HEK293 (cell line): ENCODE measurements at regions of chr12 and their contacts with region 1.

Region 1: DNA sequence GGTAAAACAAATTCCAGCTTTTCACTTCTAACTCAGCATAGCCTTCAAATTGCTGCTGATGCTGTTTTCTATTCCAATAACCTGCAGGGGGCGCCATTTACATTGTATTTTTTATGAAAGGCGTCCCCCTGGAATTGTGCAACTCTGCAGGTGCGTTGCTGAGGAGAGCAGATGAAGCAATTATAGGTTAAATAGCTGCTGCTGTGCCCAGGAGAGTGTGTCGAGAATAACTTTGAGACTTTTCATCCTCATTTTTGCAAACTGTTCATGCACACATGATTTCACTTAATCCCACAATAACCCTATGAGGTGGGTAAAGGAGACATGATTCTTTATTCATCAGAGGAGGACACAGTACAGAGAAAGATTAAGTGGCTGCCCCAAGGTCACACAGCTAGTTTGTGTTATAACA is 75.7 kb downstream of the MYRFL start:
- H3K4me3 ChIP-seq: no peak overlapping the region
- H3K27ac ChIP-seq: no peak overlapping the region
- H3K4me1 ChIP-seq: no peaks in the 10 kb centered on the region
- CTCF ChIP-seq: peak; percentile 56; the same call in 1 of the 2 replicates

Region 2: GRCh38 chr12:69840727-69841126 is 60.0 kb before region 1 on chr12:
- CTCF ChIA-PET with region 1: no interaction called
- POLR2A ChIA-PET with region 1: no interaction called
- H3K4me3 ChIP-seq: no peak overlapping the region
- H3K27ac ChIP-seq: no peak overlapping the region
- H3K4me1 ChIP-seq: no peaks in the 10 kb centered on the region
- CTCF ChIP-seq: no peak

Region 3: GRCh38 chr12:69879041-69879960 is 21.4 kb before region 1 on chr12:
- CTCF ChIA-PET with region 1: interaction called, 25 read pairs
- POLR2A ChIA-PET with region 1: no interaction called
- H3K4me3 ChIP-seq: no peak overlapping the region
- H3K27ac ChIP-seq: no peak overlapping the region
- H3K4me1 ChIP-seq: no peaks in the 10 kb centered on the region
- CTCF ChIP-seq: peak; percentile 64; the same call in 1 of the 2 replicates

Region 4: GRCh38 chr12:69885658-69886057 is 15.1 kb before region 1 on chr12:
- CTCF ChIA-PET with region 1: interaction called, 17 read pairs
- POLR2A ChIA-PET with region 1: no interaction called
- H3K4me3 ChIP-seq: no peak overlapping the region
- H3K27ac ChIP-seq: no peak overlapping the region
- H3K4me1 ChIP-seq: no peaks in the 10 kb centered on the region
- CTCF ChIP-seq: no peak

Region 5: DNA sequence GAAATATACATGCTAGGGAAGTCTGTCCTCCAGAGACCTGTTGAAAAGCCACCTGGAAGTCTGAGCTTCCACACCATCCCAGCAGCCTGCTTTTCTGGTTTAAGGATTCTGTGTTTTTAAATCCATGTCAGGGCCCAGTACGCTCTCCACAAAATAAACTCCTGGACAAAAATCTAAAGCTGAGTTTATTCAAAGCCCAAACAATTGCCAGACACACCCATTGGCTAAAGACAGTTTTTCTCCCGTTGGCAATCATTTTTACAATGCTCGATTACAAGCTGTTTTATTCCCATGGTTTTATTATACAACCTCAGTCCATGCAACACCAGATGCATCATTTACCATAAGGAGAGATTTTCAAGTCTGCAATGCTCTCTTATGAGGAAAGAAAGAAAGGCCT is 18.8 kb after region 1 on chr12:
- CTCF ChIA-PET with region 1: interaction called, 11 read pairs
- POLR2A ChIA-PET with region 1: no interaction called
- H3K4me3 ChIP-seq: no peak overlapping the region
- H3K27ac ChIP-seq: no peak overlapping the region
- H3K4me1 ChIP-seq: no peaks in the 10 kb centered on the region
- CTCF ChIP-seq: no peak

Region 6: GRCh38 chr12:70576346-70577282 is 675.9 kb after region 1 on chr12:
- CTCF ChIA-PET with region 1: interaction called, 37 read pairs
- POLR2A ChIA-PET with region 1: no interaction called
- H3K4me3 ChIP-seq: no peak overlapping the region
- H3K27ac ChIP-seq: no peak overlapping the region
- H3K4me1 ChIP-seq: no peaks in the 10 kb centered on the region; the same call in 1 of the 2 replicates
- CTCF ChIP-seq: peak; percentile 50; the same call in 1 of the 2 replicates

Region 7: DNA sequence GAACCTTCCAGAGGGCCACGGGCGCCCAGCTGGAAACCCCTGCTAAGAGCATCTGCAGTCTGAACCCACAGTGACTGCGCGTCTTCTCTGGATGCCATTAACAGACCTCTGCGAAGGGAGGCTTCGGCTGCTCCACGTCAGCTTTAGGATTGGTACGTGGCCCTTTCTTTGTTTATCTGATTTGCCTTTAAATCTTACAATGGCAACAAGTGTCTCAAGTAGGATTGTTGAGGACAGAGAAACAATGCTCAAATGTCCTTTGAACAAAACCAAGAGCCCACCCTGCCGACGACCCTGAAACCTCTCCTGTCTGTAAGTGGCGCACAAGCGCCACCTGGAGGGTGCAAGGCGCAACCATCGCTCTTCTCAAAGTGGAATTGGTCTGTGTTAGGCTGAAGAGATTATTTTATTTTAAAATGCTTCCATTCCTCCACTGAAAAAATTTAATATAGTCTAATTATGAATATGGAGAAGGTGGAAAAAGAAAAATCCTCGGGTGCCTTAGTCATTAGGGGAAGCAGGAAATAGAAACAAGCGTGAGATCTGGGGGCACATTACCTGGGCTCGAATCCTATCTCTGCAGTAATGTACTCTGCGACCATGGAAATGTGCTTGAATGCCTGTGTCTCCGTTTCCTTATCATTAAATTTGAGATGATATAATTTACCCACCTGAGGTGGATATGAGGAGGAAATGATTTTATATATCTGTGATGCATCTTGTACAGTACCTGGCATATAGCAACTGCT is 819.1 kb after region 1 on chr12:
- CTCF ChIA-PET with region 1: interaction called, 21 read pairs
- POLR2A ChIA-PET with region 1: no interaction called
- H3K4me3 ChIP-seq: no peak overlapping the region
- H3K27ac ChIP-seq: no peak overlapping the region
- H3K4me1 ChIP-seq: no peaks in the 10 kb centered on the region
- CTCF ChIP-seq: peak; percentile 45; the same call in 1 of the 2 replicates